Left cardiac atrium (tissue), 4 donors: ENCODE measurements at regions of chr16 and their contacts with region 1.

Region 1: DNA sequence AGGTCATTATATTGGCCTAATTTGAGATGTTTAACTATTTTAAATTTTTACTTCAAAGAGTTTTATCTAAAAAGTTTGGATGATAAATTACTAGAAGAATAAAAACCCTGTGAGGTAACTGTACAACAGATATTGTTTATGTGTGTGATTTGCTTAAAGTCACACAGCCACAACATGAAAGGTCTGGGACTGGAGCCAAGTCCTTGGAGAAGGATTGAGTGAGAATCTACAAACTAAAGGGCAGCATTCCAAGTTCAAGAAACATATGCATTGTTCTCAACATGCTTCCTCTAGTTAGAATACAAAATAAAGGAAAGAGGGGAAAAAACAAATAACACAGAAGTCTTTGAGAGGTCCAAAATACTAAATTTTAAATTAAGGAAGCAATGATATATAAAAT is 131.5 kb upstream of the MON1B start:
- DNase-seq: no peak
- ATAC-seq: no peak

Region 2: GRCh38 chr16:76946879-76947278 is 112.6 kb before region 1 on chr16:
- intact Hi-C with region 1: no loop called
- DNase-seq: no peak
- ATAC-seq: peak; percentile 94 to 97

Region 3: GRCh38 chr16:77117707-77118106 is 58.3 kb after region 1 on chr16:
- intact Hi-C with region 1: loop called in 1 of 2 experiments (anchors 10 kb)
- DNase-seq: no peak
- ATAC-seq: peak; percentile 72 to 92